MCF 10A (cell line): ENCODE measurements at regions of chr6 and their contacts with region 1.

Region 1: DNA sequence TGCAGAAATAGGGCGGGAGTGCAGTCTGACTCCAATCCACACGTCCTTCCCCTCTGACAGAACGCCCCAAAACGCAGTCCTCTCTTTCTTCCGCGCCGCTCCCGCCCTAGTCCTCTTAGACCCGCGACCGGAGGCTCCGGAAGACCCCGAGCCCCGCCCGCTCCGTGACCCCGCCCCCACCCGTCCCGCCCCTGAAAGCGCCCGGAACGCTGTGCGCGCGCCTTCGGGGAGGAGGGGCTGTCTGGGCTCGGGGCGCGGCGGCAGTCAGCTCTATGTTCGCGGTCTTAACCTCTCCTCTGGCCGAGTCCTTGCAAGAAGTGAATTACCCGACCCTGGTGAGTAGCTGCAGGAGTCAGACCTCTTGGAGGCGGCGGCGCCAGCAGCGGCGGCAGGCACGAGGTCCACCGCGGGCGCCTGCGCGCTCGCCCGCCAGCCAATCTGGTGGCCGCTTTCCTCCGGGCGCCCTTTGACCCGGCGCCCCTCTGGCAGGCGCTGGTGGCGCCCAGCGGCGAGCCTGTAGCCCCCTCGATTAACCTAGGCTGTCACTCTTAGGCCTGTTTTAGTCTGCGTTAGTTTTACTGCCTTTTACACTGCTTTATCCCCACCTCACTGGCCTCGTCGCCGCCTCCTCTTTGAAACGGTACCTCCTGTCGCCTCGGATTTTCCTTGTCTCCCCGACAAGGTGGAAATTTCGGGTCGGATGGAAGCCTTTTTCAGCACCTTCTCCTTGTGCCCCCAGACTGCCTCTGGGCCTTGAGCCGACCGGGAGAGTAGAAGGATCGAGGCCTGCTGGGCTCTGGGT is at the start of gene MANEA:
- DNase-seq: peak; percentile 76
- H3K4me3 Mint-ChIP-seq: peak within 1 kb of the TSS; percentile 98
- H3K27ac Mint-ChIP-seq: peak within 1 kb of the TSS; percentile 99
- H3K4me1 Mint-ChIP-seq: peaks cover 13% of the 10 kb centered on the region
- H3K27me3 Mint-ChIP-seq: no peaks in the 10 kb centered on the region
- CTCF ChIP-seq: no peak
- total RNA-seq, gene MANEA: 4.6 and 6.0 TPM in 2 replicates

Region 2: DNA sequence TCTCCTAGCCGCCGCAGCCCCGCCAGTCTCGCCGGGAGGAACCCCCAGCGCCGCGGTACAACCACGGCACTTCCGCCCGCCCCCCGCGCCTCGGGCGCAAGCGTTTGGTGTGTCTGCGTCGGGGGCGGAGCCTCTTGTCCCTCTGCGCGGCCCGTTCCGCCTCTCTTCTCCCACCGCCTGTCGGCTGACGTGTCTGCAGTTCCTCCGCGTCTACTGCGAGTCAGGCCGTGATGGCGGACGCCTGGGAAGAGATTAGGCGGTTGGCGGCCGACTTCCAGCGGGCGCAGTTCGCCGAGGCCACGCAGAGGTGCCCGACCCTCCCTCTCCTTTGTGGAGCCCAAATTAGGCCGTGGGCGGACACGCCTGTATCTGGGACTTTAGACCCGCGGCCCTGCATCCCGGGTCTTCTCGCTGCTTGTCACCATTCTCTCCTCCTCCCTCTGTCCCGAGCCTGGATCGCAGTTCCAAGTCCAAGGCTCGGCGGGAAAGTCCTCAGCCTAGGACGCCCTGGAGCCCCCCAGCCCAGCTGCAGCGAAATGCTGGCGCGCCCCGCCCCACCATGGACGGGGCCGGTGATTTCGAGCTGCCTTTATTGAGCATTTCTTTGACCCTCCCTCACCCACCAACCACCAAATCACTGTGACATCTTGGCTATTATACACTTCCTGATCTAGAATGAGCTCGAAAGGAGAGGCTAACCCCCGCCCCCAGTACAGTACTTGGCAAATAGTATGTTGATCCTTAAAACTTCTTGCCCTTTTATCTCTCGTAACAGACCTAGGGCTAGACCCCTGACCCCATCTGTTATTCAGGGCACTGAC is 944.3 kb after region 1 on chr6 and contains the start of gene UFL1:
- CTCF ChIA-PET with region 1: no interaction called
- POLR2A ChIA-PET with region 1: no interaction called
- intact Hi-C with region 1: loop called (anchors 5 kb)
- DNase-seq: peak; percentile 92
- H3K4me3 Mint-ChIP-seq: peak within 1 kb of the TSS; percentile 98
- H3K27ac Mint-ChIP-seq: peak within 1 kb of the TSS; percentile 99
- H3K4me1 Mint-ChIP-seq: peaks cover 17% of the 10 kb centered on the region
- H3K27me3 Mint-ChIP-seq: no peaks in the 10 kb centered on the region
- CTCF ChIP-seq: no peak
- total RNA-seq, gene UFL1: 41.6 and 48.0 TPM in 2 replicates